Prostate gland (tissue), 2 donors: ENCODE measurements at regions of chr12 and their contacts with region 1.

Region 1: DNA sequence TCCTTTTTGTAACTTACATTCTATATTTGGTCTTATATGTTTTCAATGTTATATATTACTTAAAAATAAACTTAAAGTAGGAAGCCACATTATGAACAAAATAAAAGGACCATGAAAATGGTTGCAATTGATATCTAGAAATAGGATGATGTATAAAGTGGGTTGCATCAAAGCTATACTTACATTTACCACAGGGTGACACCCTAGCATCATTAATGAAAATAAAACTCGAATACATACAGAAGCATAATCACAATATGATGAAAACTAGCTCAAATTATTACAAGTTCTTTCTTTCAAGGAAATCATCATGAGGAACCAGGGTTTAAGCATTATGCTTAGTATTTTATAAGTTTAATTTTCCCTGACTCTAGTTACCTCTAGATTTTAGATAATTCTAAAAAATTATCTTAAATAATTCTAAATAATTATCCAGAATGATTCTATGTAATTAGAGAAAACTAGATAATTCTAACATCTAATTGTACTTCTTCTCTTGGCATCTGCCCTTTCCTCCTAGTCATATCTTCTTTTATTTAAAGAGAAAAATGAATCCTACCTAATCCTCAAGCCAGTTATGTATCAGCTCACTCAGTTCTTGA is 31.2 kb downstream of the TAS2R7 start:
- DNase-seq: no peak
- H3K4me3 ChIP-seq: no peak overlapping the region
- H3K27ac ChIP-seq: no peak overlapping the region
- H3K4me1 ChIP-seq: no peaks in the 10 kb centered on the region
- H3K27me3 ChIP-seq: peaks cover 3% of the 10 kb centered on the region
- CTCF ChIP-seq: peak in 3 of 4 experiments; percentile 34 to 81 (median 75)
- POLR2A ChIP-seq: no peak

Region 2: DNA sequence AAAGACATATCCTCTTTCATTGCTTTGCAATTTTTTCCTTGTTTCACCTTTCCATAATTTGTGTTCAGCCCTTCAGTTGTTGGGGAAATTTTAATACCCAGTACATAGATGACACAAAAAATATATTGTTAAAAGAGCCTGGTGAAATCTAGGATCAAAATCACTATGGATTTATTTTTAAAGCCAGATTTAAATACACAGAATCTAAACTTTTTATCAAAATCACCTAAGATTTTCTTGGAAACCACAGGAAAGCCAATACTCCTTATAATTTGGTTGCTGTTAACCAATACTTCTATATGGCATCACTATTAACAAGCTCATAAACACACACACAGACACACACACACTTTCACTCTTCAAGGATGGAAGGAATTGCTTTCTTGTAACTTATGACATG is 227.0 kb after region 1 on chr12 and contains the start of gene TAS2R20:
- intact Hi-C with region 1: no loop called
- DNase-seq: no peak
- H3K4me3 ChIP-seq: no peak within 1 kb of the TSS
- H3K27ac ChIP-seq: no peak within 1 kb of the TSS
- H3K4me1 ChIP-seq: no peaks in the 10 kb centered on the region
- H3K27me3 ChIP-seq: no peaks in the 10 kb centered on the region
- CTCF ChIP-seq: no peak
- POLR2A ChIP-seq: no peak
- total RNA-seq, gene TAS2R20: 1.2 to 3.6 TPM

Region 3: GRCh38 chr12:11067514-11067913 is 296.3 kb after region 1 on chr12:
- intact Hi-C with region 1: no loop called
- DNase-seq: no peak
- H3K4me3 ChIP-seq: no peak overlapping the region
- H3K27ac ChIP-seq: no peak overlapping the region
- H3K4me1 ChIP-seq: no peaks in the 10 kb centered on the region
- H3K27me3 ChIP-seq: no peaks in the 10 kb centered on the region
- CTCF ChIP-seq: no peak
- POLR2A ChIP-seq: no peak

Region 4: GRCh38 chr12:11202811-11203210 is 431.6 kb after region 1 on chr12:
- intact Hi-C with region 1: loop called (anchors 5 kb)
- DNase-seq: no peak
- H3K4me3 ChIP-seq: no peak overlapping the region
- H3K27ac ChIP-seq: no peak overlapping the region
- H3K4me1 ChIP-seq: no peaks in the 10 kb centered on the region
- H3K27me3 ChIP-seq: no peaks in the 10 kb centered on the region
- CTCF ChIP-seq: no peak
- POLR2A ChIP-seq: no peak

Region 5: GRCh38 chr12:11486623-11487444 is 715.6 kb after region 1 on chr12:
- intact Hi-C with region 1: loop called (anchors 5 kb)
- DNase-seq: peak; percentile 69
- H3K4me3 ChIP-seq: no peak overlapping the region
- H3K27ac ChIP-seq: no peak overlapping the region
- H3K4me1 ChIP-seq: no peaks in the 10 kb centered on the region
- H3K27me3 ChIP-seq: no peaks in the 10 kb centered on the region
- CTCF ChIP-seq: peak; percentile 81 to 98 (median 94)
- POLR2A ChIP-seq: no peak